ENCODE measurements at regions of chr3 and their contacts with region 1.

Region 1: GRCh38 chr3:107660306-107660976 is 137.7 kb downstream of the BBX start:
- DNase-seq: peak; percentile 56
- H3K4me3 ChIP-seq: no peak overlapping the region
- H3K27ac ChIP-seq: no peak overlapping the region
- H3K4me1 ChIP-seq: peaks cover 35% of the 10 kb centered on the region
- H3K27me3 ChIP-seq: no peaks in the 10 kb centered on the region
- CTCF ChIP-seq: peak; percentile 34 to 46
- POLR2A ChIP-seq: no peak

Region 2: DNA sequence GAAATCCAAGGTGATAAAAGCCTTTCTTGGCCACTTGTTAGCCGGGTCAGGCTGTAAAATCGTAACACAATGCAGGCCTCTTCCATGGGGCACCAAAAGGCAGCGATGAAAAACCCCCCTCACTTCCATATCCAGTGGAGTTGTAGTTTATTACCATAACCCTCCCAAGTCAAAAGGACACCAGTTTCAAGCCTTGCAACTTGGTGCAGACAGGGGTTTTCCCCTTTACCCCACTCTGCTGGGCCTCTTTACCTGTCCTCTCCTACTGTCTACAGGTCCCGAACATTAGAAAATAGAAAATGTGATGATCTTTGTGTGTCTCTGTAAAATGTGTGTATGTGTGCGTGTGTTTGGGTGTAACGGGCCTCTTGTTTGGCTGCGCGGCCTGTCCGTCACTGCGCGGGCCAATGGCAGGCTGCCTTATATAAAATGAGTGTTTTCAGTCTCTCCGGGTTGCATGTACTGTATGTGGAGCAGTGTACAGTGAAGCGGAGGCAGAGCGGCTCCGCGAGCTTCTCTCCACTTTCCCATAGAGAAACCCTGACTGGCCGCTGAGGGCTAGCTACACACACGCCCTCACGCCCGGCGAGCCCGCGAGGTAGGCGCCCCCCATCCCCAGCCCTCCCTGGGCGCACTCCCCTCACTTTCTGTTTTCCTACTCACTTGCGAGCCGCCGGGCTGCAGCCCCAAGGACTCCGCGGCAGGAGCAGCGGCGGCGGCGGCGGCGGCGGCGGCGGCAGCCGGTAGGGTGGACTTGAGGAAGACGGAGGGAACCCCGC is 137.7 kb before region 1 on chr3 and contains the start of gene BBX:
- CTCF ChIA-PET with region 1: no interaction called
- POLR2A ChIA-PET with region 1: no interaction called
- dilution Hi-C with region 1: no loop called
- intact Hi-C with region 1: loop called (anchors 5 kb)
- DNase-seq: peak; percentile 99
- H3K4me3 ChIP-seq: peak within 1 kb of the TSS; percentile 85 to 87 (median 86)
- H3K27ac ChIP-seq: peak within 1 kb of the TSS; percentile 18
- H3K4me1 ChIP-seq: peaks cover 8% of the 10 kb centered on the region
- H3K27me3 ChIP-seq: peaks cover 1 to 2% of the 10 kb centered on the region in 2 experiments
- CTCF ChIP-seq: no peak
- POLR2A ChIP-seq: peak; percentile 25
- total RNA-seq, gene BBX: 35.6 and 43.4 TPM in 2 replicates

Region 3: GRCh38 chr3:107598926-107599771 is 61.3 kb before region 1 on chr3:
- CTCF ChIA-PET with region 1: interaction called, 17 read pairs
- POLR2A ChIA-PET with region 1: no interaction called
- dilution Hi-C with region 1: no loop called
- intact Hi-C with region 1: no loop called
- DNase-seq: peak; percentile 84
- H3K4me3 ChIP-seq: peak overlapping the region; percentile 19 to 62 (median 37)
- H3K27ac ChIP-seq: peak overlapping the region; percentile 84
- H3K4me1 ChIP-seq: peaks cover 20% of the 10 kb centered on the region
- H3K27me3 ChIP-seq: no peaks in the 10 kb centered on the region
- CTCF ChIP-seq: no peak
- POLR2A ChIP-seq: no peak

Region 4: DNA sequence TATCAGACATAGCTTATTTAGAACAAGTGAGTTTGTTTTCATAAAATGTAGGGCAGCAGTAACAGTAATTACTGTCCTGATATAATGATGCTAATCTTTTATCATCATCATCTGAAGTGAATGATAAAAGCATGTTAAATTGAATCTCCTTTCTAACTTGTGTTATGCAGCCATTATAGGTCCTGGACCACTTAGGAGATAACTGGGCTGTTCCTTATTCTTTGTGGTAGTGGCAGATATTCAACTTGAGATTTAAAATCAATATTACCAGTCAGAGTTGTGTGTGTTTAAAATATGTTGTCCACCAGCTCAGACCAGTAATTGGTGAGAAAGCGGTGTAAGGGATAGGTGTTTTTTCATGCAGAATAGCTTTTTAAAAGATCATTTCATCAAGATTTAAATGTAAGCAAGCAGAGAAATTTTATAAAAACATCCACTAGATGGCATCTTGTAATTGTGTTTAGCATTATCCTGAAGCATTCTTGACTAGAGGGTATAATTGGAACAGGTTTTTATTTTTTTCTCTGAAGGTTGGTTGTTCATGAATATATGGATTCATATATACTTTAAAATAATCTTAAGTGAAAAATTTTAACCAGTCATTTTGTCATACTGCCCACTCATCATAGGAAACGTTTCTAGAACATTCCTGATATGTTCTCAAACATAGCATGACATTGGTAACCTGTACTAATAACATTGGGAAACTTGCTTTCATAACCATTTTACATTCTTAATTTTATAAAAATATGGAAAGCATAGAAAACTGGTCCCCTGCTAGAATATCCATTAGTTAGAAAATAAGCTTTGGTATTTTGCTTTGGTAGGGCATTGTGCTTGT is 16.2 kb after region 1 on chr3:
- CTCF ChIA-PET with region 1: interaction called, 169 read pairs
- POLR2A ChIA-PET with region 1: no interaction called
- dilution Hi-C with region 1: no loop called
- intact Hi-C with region 1: no loop called
- DNase-seq: peak; percentile 42
- H3K4me3 ChIP-seq: no peak overlapping the region
- H3K27ac ChIP-seq: no peak overlapping the region
- H3K4me1 ChIP-seq: no peaks in the 10 kb centered on the region
- H3K27me3 ChIP-seq: no peaks in the 10 kb centered on the region
- CTCF ChIP-seq: peak; percentile 20 to 31
- POLR2A ChIP-seq: no peak

Region 5: GRCh38 chr3:107740992-107741896 is 80.8 kb after region 1 on chr3:
- CTCF ChIA-PET with region 1: interaction called, 83 read pairs
- POLR2A ChIA-PET with region 1: no interaction called
- dilution Hi-C with region 1: no loop called
- intact Hi-C with region 1: loop called (anchors 1 kb)
- DNase-seq: peak; percentile 59
- H3K4me3 ChIP-seq: no peak overlapping the region
- H3K27ac ChIP-seq: no peak overlapping the region
- H3K4me1 ChIP-seq: no peaks in the 10 kb centered on the region
- H3K27me3 ChIP-seq: no peaks in the 10 kb centered on the region
- CTCF ChIP-seq: peak in 1 of 2 donors; percentile 25
- POLR2A ChIP-seq: no peak

Region 6: GRCh38 chr3:107927361-107928083 is 267.1 kb after region 1 on chr3:
- CTCF ChIA-PET with region 1: interaction called, 34 read pairs
- POLR2A ChIA-PET with region 1: no interaction called
- dilution Hi-C with region 1: no loop called
- intact Hi-C with region 1: loop called (anchors 2 kb)
- DNase-seq: peak; percentile 81
- H3K4me3 ChIP-seq: peak overlapping the region; percentile 67 to 73 (median 68)
- H3K27ac ChIP-seq: no peak overlapping the region
- H3K4me1 ChIP-seq: peaks cover 11% of the 10 kb centered on the region
- H3K27me3 ChIP-seq: peaks cover 0 to 2% of the 10 kb centered on the region in 2 experiments
- CTCF ChIP-seq: peak; percentile 93 to 96
- POLR2A ChIP-seq: no peak

Region 7: GRCh38 chr3:108062051-108062450 is 401.6 kb after region 1 on chr3:
- CTCF ChIA-PET with region 1: no interaction called
- POLR2A ChIA-PET with region 1: no interaction called
- dilution Hi-C with region 1: no loop called
- intact Hi-C with region 1: no loop called
- DNase-seq: no peak
- H3K4me3 ChIP-seq: no peak overlapping the region
- H3K27ac ChIP-seq: no peak overlapping the region
- H3K4me1 ChIP-seq: no peaks in the 10 kb centered on the region
- H3K27me3 ChIP-seq: no peaks in the 10 kb centered on the region
- CTCF ChIP-seq: no peak
- POLR2A ChIP-seq: no peak

Measured in endothelial cell of umbilical vein (primary cell).